ENCODE measurements at regions of chr6 and their contacts with region 1.

Region 1: GRCh38 chr6:84728598-84728997 is 35.8 kb downstream of the TBX18 start:
- DNase-seq: no peak
- H3K4me3 ChIP-seq: no peak overlapping the region
- CTCF ChIP-seq: peak; percentile 15

Region 2: GRCh38 chr6:84575264-84575663 is 153.3 kb before region 1 on chr6:
- CTCF ChIA-PET with region 1: no interaction called
- POLR2A ChIA-PET with region 1: no interaction called
- DNase-seq: no peak
- H3K4me3 ChIP-seq: no peak overlapping the region
- CTCF ChIP-seq: no peak

Region 3: DNA sequence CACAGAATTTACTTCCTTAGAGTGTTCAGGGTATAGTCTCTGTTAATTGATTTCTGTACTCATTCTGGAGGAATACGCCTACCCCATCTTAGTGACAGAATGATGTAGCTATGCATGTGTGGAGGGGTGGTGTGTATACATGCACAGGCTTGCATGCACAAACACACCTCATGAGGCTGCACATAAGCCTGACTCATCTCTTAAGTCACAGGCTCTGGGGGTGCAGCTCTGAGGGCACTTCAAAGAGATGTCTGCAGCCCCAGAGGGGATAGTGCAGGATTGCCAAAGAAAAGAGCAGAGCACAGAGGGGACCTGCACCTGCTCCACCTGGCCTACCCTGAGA is 11.2 kb after region 1 on chr6:
- CTCF ChIA-PET with region 1: interaction called, 12 read pairs
- POLR2A ChIA-PET with region 1: no interaction called
- DNase-seq: no peak
- H3K4me3 ChIP-seq: no peak overlapping the region
- CTCF ChIP-seq: no peak